Transverse colon (tissue), 4 donors: ENCODE measurements at regions of chr5 and their contacts with region 1.

Region 1: DNA sequence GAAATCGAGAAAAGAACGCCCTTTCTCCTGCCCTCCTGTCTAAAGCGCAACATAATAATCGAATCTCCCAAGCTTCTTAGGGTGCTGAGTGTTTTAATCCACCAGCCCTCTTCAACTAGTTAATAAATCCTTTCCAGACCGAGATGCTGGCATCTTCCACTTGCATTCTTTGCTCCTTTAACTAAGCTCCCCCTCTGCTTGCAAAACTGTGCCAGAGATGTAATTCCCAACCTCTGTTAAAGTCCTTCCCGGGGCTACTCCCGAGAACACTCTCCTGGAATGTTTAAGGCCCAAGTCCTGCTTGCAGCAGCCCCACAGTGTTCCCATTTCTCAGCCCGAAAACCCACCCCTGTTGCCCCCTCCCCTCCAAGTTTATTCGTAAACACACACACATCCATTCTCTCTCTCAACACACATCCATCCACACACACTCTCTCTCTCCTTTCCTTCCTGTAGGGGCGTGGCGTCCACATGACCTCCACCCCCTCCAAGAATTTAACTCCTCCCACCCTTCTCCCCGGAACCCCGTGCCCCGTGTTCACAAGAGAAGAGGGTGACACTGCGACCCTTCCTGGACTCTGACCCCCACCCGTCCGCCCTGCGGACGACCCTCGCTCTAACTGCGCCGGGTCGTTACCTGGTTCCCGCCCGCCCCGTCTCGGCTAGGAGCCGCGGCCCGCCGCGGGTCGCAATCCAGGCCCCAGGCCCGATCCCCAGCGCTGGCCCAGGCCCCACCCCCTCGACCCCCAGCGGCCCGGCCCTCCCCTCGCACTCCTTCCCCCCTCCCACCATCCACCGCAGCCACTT is 7.0 kb upstream of the MGAT1 start:
- DNase-seq: peak; percentile 94
- H3K4me3 ChIP-seq: peak overlapping the region; percentile 63 to 75 (median 70)
- H3K27ac ChIP-seq: peak overlapping the region; percentile 99 to 100 (median 99)
- H3K4me1 ChIP-seq: peaks cover 39 to 63% (median 55%) of the 10 kb centered on the region in 4 donors
- H3K27me3 ChIP-seq: no peaks in the 10 kb centered on the region
- CTCF ChIP-seq: no peak
- EP300 ChIP-seq: no peak
- POLR2A ChIP-seq: peak; percentile 35

Region 2: DNA sequence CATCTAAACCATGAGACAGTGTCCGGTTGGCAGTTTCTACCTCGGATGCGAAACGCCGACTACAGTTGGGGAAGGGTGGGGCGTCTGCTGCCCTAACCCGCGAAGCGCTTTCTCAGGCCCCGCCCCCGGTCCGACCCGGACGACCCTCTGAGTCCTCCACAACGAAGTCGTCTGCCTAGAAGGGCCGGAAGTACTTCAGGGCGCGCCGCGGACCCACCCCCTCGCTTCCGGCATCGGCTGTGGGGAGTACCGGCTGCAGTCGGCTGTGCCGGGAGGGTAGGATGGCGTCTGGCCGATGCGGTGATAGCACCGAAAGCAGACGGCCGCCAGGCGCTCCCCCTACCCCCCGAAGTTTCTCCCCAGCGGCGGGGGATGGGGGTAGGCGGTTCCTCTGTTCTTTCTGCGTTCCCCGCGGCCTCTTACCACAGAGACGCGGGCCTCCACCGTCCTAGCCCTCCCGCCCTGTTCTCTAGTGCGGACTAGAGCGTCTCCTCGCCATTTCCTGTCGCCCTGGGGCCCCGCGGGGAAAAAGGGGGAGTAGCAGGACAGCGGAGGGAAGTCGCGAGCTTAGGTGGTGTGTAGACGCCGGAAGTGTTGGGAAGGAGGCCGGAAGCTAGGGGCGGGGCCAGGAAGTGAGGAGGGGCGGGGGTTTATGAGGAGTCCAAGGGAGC is 413.6 kb after region 1 on chr5 and contains the start of gene TRIM41:
- in situ Hi-C with region 1: no loop called
- intact Hi-C with region 1: loop called (anchors 10 kb)
- DNase-seq: peak; percentile 99
- H3K4me3 ChIP-seq: peak within 1 kb of the TSS; percentile 59 to 87 (median 66)
- H3K27ac ChIP-seq: peak within 1 kb of the TSS; percentile 93 to 97 (median 95)
- H3K4me1 ChIP-seq: peaks cover 6 to 26% (median 9%) of the 10 kb centered on the region in 4 donors
- H3K27me3 ChIP-seq: no peaks in the 10 kb centered on the region
- CTCF ChIP-seq: peak in 4 of 5 experiments; percentile 3 to 59 (median 8)
- EP300 ChIP-seq: peak; percentile 43
- POLR2A ChIP-seq: peak; percentile 96
- total RNA-seq, gene TRIM41: 17.9 to 23.9 (median 18.7) TPM